ENCODE measurements at regions of chr20 and their contacts with region 1.

Region 1: GRCh38 chr20:33489495-33490022 is 337 bp upstream of the CBFA2T2 start:
- DNase-seq: peak; percentile 99 to 100 (median 100)

Region 2: GRCh38 chr20:33443512-33444239 is 45.9 kb before region 1 on chr20 and contains the start of gene SNTA1:
- intact Hi-C with region 1: loop called (anchors 2 kb)
- DNase-seq: peak; percentile 69 to 95 (median 78)

Region 3: DNA sequence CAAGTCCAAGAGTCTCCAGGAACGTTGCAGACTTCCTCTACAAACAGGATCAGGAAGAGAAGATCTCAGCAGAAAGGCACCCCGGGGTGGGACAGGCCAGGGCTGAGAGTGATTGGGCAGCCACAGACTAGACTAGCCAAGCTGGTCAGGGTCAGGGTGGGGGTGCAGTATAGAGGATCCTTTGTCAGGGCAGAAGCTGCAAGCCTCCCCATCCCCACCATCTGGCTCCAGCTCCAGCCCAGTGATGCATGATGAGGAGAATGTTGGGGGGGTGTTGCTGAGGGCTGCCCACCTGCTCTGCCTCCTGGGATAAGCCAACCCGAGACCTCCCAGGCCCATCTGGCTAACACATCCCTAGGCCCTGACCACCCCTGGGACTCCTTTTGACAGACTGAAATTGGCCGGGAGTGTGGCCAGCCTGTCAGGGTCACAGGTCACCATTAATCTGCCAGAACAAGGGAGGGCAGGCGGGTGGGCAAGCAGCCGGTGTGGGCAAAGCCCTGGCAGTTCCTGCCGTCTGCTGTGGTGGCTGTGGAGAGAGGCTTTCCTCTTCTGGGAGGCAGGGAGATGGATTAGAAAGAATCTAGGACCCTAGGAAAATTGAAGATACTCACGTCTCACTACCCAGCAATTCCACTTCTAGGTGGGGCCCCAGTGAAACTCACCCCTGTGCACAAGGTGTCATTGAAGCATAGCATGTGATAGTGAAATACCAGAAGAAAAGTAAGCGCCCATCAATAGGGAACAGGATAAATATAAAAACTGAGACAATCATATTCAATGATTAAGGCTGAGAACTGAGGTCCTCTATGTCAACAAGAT is 23.9 kb before region 1 on chr20:
- intact Hi-C with region 1: loop called (anchors 1 kb)
- DNase-seq: peak; percentile 72 to 97 (median 84)

Region 4: DNA sequence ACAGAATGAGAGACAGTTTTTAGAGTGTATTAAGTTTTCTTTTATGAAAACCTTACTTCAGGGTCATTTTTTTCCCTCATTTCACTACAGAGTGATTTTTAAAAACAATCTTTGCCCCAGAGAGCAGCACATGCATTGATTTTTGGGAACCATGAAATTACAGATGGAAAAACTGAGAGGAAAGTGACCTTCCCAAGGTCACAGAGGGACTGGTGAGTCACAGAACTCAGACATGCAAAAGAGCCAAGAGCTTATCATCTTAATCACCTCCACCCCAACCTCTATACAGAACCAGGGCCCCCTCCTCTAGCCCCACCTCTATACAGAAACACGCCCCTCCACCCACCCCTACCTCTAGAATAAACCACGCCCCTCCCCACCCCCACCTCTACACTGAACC is 219.8 kb after region 1 on chr20:
- intact Hi-C with region 1: no loop called
- DNase-seq: no peak

Measured in posterior cingulate gyrus (tissue), 11 donors.